Caco-2 (cell line): ENCODE measurements at regions of chr3 and their contacts with region 1.

Region 1: DNA sequence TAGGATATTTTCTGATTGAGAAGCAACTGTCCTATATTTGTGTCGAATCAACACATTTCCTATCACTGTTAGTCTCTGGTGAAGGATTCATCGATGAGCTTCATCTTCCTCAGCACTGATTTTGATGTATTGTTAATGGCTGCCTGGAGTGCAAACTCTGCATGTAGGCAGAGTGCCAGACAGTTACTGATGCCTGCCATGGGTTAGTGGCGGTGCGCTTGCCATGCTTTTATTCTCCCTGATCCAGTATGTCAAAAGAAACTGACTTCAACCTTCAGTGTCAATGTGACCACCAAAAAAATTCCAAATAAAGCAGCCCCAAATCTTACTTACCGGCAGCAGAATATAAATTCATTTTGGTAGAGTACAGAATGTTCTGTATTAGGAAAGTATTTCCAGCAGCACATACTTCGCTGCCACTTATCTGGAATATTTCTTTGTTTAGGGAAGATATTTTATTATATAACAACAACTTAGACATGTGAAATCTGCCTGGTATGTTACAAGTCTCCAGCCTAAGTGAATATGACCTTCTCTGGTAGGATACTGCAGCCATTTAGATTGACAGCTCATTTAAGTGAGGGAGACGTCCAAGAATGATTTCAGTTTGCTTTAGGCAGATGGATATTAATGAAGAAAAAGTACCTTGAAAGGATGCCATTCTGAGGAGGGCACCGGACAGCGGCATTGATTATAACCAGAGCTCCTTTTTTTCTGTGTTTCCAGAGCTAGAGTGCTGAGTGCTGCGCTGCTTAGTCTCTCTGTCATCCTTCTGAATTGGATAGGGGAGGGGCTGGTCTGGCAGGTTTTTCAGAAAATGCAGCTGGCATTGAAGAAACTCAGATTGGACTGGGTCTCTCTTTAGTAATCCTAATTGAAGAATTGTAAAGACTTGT is 59.9 kb downstream of the ARHGEF26 start:
- DNase-seq: peak in 1 of 2 experiments; percentile 17
- H3K4me3 ChIP-seq: no peak overlapping the region
- H3K4me3 Mint-ChIP-seq: no peak overlapping the region
- H3K27ac Mint-ChIP-seq: no peak overlapping the region
- H3K4me1 ChIP-seq: no peaks in the 10 kb centered on the region
- H3K4me1 Mint-ChIP-seq: no peaks in the 10 kb centered on the region
- H3K27me3 ChIP-seq: no peaks in the 10 kb centered on the region
- H3K27me3 Mint-ChIP-seq: no peaks in the 10 kb centered on the region
- CTCF ChIP-seq: no peak

Region 2: DNA sequence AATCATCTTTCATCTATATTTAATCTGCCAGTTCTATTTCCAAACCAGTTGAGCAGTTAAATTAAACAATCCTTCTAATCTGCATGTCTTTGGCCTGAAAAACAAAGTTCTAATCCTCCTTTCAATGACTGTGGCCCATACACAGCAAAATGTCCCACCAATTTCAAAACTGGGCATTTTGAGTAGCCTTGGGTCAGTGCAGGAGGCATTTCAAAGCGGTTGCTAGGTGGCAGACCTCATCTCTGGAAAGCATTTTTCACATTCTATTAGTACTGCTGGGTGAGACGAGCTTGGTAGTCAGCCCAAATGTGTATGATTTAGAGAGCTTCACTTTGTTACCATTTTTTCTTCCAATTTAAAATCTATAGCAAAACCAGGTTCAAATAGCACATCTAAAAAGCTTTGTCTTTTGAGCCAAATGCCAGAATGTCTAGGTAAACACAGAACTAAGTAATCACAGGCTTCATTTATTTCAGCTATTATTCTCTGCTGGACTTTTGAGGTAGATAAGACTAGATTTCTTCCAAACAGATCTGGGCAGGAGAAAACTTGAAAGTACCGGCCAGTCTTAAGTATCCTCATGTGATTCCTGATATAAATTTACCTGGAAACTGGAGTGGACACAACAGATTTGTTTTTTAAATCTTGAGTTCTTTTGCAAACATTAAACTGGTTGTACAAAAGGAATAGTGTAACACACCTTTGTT is 68.8 kb before region 1 on chr3:
- CTCF ChIA-PET with region 1: no interaction called
- POLR2A ChIA-PET with region 1: no interaction called
- intact Hi-C with region 1: loop called (anchors 2 kb)
- DNase-seq: no peak
- H3K4me3 ChIP-seq: no peak overlapping the region
- H3K4me3 Mint-ChIP-seq: no peak overlapping the region
- H3K27ac Mint-ChIP-seq: no peak overlapping the region
- H3K4me1 ChIP-seq: no peaks in the 10 kb centered on the region
- H3K4me1 Mint-ChIP-seq: no peaks in the 10 kb centered on the region
- H3K27me3 ChIP-seq: no peaks in the 10 kb centered on the region
- H3K27me3 Mint-ChIP-seq: no peaks in the 10 kb centered on the region
- CTCF ChIP-seq: peak in 1 of 2 experiments; percentile 13

Region 3: DNA sequence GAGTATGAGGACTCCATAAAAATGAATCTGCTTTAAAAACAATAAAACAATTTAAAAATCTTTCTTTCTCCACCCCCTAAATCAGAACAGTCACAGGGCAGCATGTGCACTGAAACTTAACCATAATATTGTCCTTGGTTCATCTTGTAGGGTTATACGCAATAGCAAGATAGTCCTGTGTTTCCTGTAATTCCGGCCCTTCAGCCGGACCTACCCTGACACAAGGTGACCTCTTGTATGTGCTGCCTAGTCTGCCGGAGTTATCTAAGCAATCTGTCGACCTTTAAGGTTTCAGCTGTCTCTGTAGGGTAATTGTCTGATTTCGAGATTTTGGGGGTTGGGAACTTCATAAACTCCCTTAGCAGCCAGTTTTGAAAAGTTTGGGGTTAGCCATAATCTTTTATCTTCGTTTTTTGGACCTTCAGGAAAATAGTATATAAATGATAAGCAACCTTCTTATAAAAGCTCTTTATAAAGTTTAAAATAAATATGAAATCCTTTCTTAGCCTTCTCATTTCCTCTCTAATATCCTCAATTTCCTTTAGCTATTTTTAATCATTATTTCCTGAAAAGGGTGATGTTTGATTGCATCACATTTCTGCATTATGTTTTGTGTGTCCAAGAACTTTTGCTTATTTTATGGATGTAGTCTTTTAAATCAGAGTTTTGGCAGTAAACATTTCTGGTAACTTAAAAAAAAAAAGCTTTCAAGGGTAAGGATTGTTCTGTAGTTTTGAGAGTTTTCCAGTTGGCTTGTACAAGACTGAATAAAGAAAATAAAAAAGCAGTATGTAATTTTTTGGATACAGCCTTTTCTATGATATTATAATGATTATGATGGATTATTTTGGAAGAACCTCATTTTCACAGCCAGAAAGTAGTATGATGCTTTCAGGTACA is 43.5 kb after region 1 on chr3:
- CTCF ChIA-PET with region 1: no interaction called
- POLR2A ChIA-PET with region 1: no interaction called
- intact Hi-C with region 1: no loop called
- DNase-seq: peak; percentile 47 to 51
- H3K4me3 ChIP-seq: no peak overlapping the region
- H3K4me3 Mint-ChIP-seq: no peak overlapping the region
- H3K27ac Mint-ChIP-seq: no peak overlapping the region
- H3K4me1 ChIP-seq: peaks cover 22% of the 10 kb centered on the region
- H3K4me1 Mint-ChIP-seq: peaks cover 12% of the 10 kb centered on the region
- H3K27me3 ChIP-seq: no peaks in the 10 kb centered on the region
- H3K27me3 Mint-ChIP-seq: no peaks in the 10 kb centered on the region
- CTCF ChIP-seq: no peak